GM12878 (cell line): ENCODE measurements at regions of chr4 and their contacts with region 1.

Region 1: DNA sequence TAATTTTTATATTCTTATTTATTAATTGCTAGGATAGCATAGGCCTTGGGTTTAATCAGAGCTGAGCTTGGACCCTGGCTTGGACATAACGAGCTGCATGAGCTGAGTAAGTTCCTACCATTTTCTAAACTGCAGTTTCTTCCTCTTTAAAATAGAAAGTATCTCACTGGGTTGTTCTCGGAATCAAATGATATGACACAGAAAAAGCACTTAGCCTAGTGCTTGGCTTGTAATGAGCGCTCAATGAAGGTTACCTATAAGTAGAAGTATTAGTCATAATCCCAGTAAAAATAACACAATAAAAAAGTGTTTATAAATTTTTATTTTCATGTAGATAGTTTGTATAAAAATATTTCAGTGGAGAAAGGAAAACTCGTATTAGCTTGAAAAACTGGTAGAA is 113.3 kb upstream of the PDLIM3 start:
- DNase-seq: no peak
- ATAC-seq: no peak
- H3K4me3 ChIP-seq: no peak overlapping the region
- H3K27ac ChIP-seq: no peak overlapping the region
- H3K4me1 ChIP-seq: no peaks in the 10 kb centered on the region
- H3K27me3 ChIP-seq: no peaks in the 10 kb centered on the region
- CTCF ChIP-seq: no peak
- EP300 ChIP-seq: no peak
- POLR2A ChIP-seq: no peak
- RAD21 ChIP-seq: no peak

Region 2: GRCh38 chr4:186027405-186027804 is 378.8 kb after region 1 on chr4:
- CTCF ChIA-PET with region 1: no interaction called
- POLR2A ChIA-PET with region 1: no interaction called
- RAD21 ChIA-PET with region 1: no interaction called
- SMC1A ChIA-PET with region 1: no interaction called
- in situ Hi-C with region 1: no loop called
- intact Hi-C with region 1: no loop called
- DNase-seq: no peak
- ATAC-seq: no peak
- H3K4me3 ChIP-seq: no peak overlapping the region
- H3K27ac ChIP-seq: no peak overlapping the region
- H3K4me1 ChIP-seq: no peaks in the 10 kb centered on the region
- H3K27me3 ChIP-seq: peaks cover 0 to 2% of the 10 kb centered on the region in 2 experiments; a peak in 2 of 4 replicates
- CTCF ChIP-seq: no peak
- EP300 ChIP-seq: no peak
- POLR2A ChIP-seq: no peak
- RAD21 ChIP-seq: no peak

Region 3: DNA sequence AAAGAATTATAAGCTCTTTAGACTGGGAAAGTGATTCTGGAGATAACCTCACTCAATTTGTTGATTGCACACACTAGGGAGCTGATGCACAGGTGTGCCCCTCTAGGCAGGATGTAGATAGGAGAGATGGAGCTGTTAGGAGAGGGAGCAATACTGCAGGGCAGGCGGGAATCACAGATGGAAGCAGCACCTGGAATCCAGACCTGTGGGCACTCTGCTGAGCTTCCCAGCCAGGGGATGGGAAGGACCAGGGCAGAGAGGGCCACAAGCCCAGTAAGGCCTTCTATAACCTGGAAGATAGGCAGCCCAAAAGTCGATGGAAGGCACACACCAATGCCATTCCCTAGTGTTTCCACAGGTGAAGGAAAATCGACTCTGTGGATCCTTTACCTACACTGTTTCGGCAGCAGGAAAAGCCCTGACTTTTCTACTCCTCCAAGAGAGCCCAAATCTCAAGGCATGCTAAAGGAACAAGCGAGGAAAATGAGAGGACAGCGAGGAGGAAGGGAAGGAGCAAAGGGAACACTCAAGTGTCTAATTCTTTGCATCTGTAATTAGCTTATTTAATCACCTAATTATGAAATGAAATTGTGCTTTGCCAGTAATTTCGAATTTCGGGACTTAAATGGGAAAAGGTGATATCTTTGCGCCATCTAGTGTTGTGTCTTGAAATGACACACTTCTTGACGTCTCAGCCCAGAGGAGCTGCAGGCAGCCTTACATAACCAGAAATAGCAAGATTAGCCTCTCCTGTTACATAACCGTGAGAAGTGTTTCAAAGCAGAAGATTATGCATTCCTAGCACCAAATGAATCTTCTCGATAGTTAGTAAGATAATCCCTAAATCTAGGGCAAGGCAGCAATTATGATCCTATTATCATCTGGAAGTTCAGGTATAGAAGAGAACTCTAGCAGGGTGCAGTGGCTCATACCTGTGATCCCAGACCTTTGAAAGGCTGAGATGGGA is 389.3 kb after region 1 on chr4:
- CTCF ChIA-PET with region 1: interaction called, 4 read pairs
- POLR2A ChIA-PET with region 1: no interaction called
- RAD21 ChIA-PET with region 1: no interaction called
- SMC1A ChIA-PET with region 1: no interaction called
- in situ Hi-C with region 1: loop called (anchors 5 kb)
- intact Hi-C with region 1: no loop called
- DNase-seq: peak; percentile 36
- ATAC-seq: peak; percentile 84
- H3K4me3 ChIP-seq: no peak overlapping the region
- H3K27ac ChIP-seq: no peak overlapping the region
- H3K4me1 ChIP-seq: no peaks in the 10 kb centered on the region
- H3K27me3 ChIP-seq: peaks cover 0 to 2% of the 10 kb centered on the region in 2 experiments; a peak in 2 of 4 replicates
- CTCF ChIP-seq: peak; percentile 58 to 81 (median 74); a peak in 5 of 6 replicates
- EP300 ChIP-seq: no peak
- POLR2A ChIP-seq: no peak
- RAD21 ChIP-seq: peak; percentile 81